CD4-positive, alpha-beta memory T cell (primary cell): ENCODE measurements at regions of chr12 and their contacts with region 1.

Region 1: GRCh38 chr12:120194534-120195395 is at the start of gene GCN1:
- DNase-seq: peak; percentile 87 to 92 (median 89)
- H3K4me3 ChIP-seq: peak within 1 kb of the TSS; percentile 74 to 89
- H3K4me3 Mint-ChIP-seq: peak within 1 kb of the TSS; percentile 86 to 93 (median 90)
- H3K27ac ChIP-seq: peak within 1 kb of the TSS; percentile 79
- H3K27ac Mint-ChIP-seq: peak within 1 kb of the TSS; percentile 97 to 98 (median 98)
- H3K4me1 ChIP-seq: peaks cover 55% of the 10 kb centered on the region
- H3K4me1 Mint-ChIP-seq: peaks cover 30 to 70% (median 40%) of the 10 kb centered on the region in 4 donors
- H3K27me3 ChIP-seq: no peaks in the 10 kb centered on the region
- H3K27me3 Mint-ChIP-seq: no peaks in the 10 kb centered on the region
- total RNA-seq, gene GCN1: 127 to 132 TPM

Region 2: GRCh38 chr12:119804011-119804641 is 390.6 kb before region 1 on chr12:
- CTCF ChIA-PET with region 1: no interaction called
- POLR2A ChIA-PET with region 1: no interaction called
- intact Hi-C with region 1: no loop called
- DNase-seq: no peak
- H3K4me3 ChIP-seq: no peak overlapping the region
- H3K4me3 Mint-ChIP-seq: no peak overlapping the region
- H3K27ac ChIP-seq: no peak overlapping the region
- H3K27ac Mint-ChIP-seq: no peak overlapping the region
- H3K4me1 ChIP-seq: no peaks in the 10 kb centered on the region
- H3K4me1 Mint-ChIP-seq: peaks cover 5 to 7% (median 6%) of the 10 kb centered on the region in 4 donors
- H3K27me3 ChIP-seq: no peaks in the 10 kb centered on the region
- H3K27me3 Mint-ChIP-seq: no peaks in the 10 kb centered on the region

Region 3: DNA sequence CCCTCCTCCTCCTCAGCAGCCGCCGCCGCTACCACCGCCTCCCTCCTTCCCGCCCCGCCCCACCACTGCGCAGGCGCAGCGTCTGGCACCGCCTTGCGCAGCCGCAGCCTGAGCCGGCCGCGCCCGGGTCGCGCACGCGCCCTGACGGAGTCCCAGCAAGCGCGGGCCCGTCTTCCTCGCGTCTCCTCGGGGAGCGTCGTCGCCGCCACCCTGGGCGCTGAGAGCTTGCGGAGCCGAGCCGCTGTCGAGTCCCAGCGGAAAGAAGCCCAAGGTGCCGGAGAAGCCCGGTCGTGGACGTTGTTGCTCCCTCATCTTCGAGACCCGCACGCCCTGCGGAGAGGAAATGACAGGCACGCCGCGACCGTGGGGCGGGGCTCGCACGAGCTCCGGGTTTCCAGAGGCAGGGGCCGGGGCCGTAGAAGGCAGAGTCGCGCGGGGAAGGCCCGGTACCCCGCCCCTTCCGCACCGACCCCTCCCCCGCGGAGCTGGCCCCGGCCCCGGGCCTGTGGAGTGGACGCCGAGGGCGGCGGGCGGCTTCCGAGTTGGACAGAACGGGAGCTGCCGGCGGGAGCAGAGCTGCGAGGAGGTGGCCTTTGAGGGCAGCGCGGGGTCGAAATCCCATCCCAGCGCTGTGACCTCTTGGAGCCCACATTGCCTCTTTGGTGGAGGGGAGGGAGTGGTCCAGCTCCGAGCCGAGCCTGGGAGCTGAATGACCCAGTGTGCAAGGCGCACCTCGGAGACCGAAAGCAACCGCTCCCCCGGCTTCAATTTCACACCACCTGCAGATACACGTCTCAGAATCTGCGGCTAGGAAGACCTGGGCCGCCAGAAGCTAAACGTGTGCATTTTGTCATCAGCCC is 77.7 kb before region 1 on chr12:
- CTCF ChIA-PET with region 1: no interaction called
- POLR2A ChIA-PET with region 1: interaction called, 52 read pairs
- intact Hi-C with region 1: no loop called
- DNase-seq: peak; percentile 95 to 99 (median 97)
- H3K4me3 ChIP-seq: peak overlapping the region; percentile 75 to 80
- H3K4me3 Mint-ChIP-seq: peak overlapping the region; percentile 86 to 98 (median 90)
- H3K27ac ChIP-seq: peak overlapping the region; percentile 83
- H3K27ac Mint-ChIP-seq: peak overlapping the region; percentile 85 to 99 (median 94)
- H3K4me1 ChIP-seq: peaks cover 84% of the 10 kb centered on the region
- H3K4me1 Mint-ChIP-seq: peaks cover 59 to 88% (median 76%) of the 10 kb centered on the region in 4 donors
- H3K27me3 ChIP-seq: no peaks in the 10 kb centered on the region
- H3K27me3 Mint-ChIP-seq: no peaks in the 10 kb centered on the region

Region 4: DNA sequence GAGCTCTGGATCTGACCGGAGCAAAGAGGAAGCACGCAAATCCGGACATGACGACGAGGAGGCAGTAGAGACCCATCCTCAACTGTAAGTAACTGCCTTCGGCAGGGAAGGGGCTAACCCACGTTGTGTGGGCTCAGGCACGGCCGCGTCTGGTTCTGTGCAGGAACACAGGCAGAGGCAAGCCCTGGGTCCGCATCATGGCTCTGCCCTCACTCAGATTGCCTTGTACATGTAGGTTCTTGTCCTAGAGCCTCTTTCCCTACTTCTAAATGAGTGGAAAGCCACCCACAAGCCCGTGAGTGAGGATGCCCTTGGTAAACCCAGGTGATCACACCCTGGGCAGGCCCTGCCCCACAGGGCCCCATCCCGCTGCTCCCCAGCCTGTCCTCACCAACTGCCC is 15.1 kb after region 1 on chr12:
- CTCF ChIA-PET with region 1: interaction called, 3 read pairs
- POLR2A ChIA-PET with region 1: interaction called, 27 read pairs
- intact Hi-C with region 1: no loop called
- DNase-seq: no peak
- H3K4me3 ChIP-seq: no peak overlapping the region
- H3K4me3 Mint-ChIP-seq: no peak overlapping the region
- H3K27ac ChIP-seq: no peak overlapping the region
- H3K27ac Mint-ChIP-seq: peak overlapping the region in 1 of 7 donors; percentile 26
- H3K4me1 ChIP-seq: no peaks in the 10 kb centered on the region
- H3K4me1 Mint-ChIP-seq: peaks cover 0 to 7% (median under 1%) of the 10 kb centered on the region in 4 donors
- H3K27me3 ChIP-seq: no peaks in the 10 kb centered on the region
- H3K27me3 Mint-ChIP-seq: no peaks in the 10 kb centered on the region

Region 5: GRCh38 chr12:120249875-120250795 is 55.4 kb after region 1 on chr12:
- CTCF ChIA-PET with region 1: no interaction called
- POLR2A ChIA-PET with region 1: interaction called, 94 read pairs
- intact Hi-C with region 1: no loop called
- DNase-seq: peak; percentile 52 to 61 (median 59)
- H3K4me3 ChIP-seq: peak overlapping the region; percentile 4 to 49
- H3K4me3 Mint-ChIP-seq: peak overlapping the region; percentile 65 to 91 (median 82)
- H3K27ac ChIP-seq: peak overlapping the region; percentile 50
- H3K27ac Mint-ChIP-seq: peak overlapping the region; percentile 81 to 99 (median 95)
- H3K4me1 ChIP-seq: peaks cover 90% of the 10 kb centered on the region
- H3K4me1 Mint-ChIP-seq: peaks cover 67 to 88% (median 78%) of the 10 kb centered on the region in 4 donors
- H3K27me3 ChIP-seq: no peaks in the 10 kb centered on the region
- H3K27me3 Mint-ChIP-seq: no peaks in the 10 kb centered on the region

Region 6: GRCh38 chr12:120265473-120266179 is 70.9 kb after region 1 on chr12 and contains the start of gene PXN:
- CTCF ChIA-PET with region 1: interaction called, 87 read pairs
- POLR2A ChIA-PET with region 1: interaction called, 102 read pairs
- intact Hi-C with region 1: no loop called
- DNase-seq: peak; percentile 84 to 93 (median 89)
- H3K4me3 ChIP-seq: peak within 1 kb of the TSS; percentile 59 to 85
- H3K4me3 Mint-ChIP-seq: peak within 1 kb of the TSS; percentile 89 to 100 (median 94)
- H3K27ac ChIP-seq: peak within 1 kb of the TSS; percentile 81
- H3K27ac Mint-ChIP-seq: peak within 1 kb of the TSS; percentile 92 to 98 (median 96)
- H3K4me1 ChIP-seq: peaks cover 44% of the 10 kb centered on the region
- H3K4me1 Mint-ChIP-seq: peaks cover 24 to 51% (median 37%) of the 10 kb centered on the region in 4 donors
- H3K27me3 ChIP-seq: no peaks in the 10 kb centered on the region
- H3K27me3 Mint-ChIP-seq: no peaks in the 10 kb centered on the region
- total RNA-seq, gene PXN: 108 to 126 TPM

Region 7: GRCh38 chr12:120301962-120302815 is 107.4 kb after region 1 on chr12 and contains the start of gene SIRT4:
- CTCF ChIA-PET with region 1: interaction called, 4 read pairs
- POLR2A ChIA-PET with region 1: interaction called, 27 read pairs
- intact Hi-C with region 1: no loop called
- DNase-seq: peak; percentile 87 to 91 (median 88)
- H3K4me3 ChIP-seq: peak within 1 kb of the TSS; percentile 65 to 94
- H3K4me3 Mint-ChIP-seq: peak within 1 kb of the TSS; percentile 93 to 98 (median 96)
- H3K27ac ChIP-seq: peak within 1 kb of the TSS; percentile 62
- H3K27ac Mint-ChIP-seq: peak within 1 kb of the TSS; percentile 77 to 95 (median 93)
- H3K4me1 ChIP-seq: peaks cover 3% of the 10 kb centered on the region
- H3K4me1 Mint-ChIP-seq: peaks cover 6 to 10% (median 8%) of the 10 kb centered on the region in 4 donors
- H3K27me3 ChIP-seq: no peaks in the 10 kb centered on the region
- H3K27me3 Mint-ChIP-seq: no peaks in the 10 kb centered on the region
- total RNA-seq, gene SIRT4: 4.9 to 5.9 TPM

Region 8: DNA sequence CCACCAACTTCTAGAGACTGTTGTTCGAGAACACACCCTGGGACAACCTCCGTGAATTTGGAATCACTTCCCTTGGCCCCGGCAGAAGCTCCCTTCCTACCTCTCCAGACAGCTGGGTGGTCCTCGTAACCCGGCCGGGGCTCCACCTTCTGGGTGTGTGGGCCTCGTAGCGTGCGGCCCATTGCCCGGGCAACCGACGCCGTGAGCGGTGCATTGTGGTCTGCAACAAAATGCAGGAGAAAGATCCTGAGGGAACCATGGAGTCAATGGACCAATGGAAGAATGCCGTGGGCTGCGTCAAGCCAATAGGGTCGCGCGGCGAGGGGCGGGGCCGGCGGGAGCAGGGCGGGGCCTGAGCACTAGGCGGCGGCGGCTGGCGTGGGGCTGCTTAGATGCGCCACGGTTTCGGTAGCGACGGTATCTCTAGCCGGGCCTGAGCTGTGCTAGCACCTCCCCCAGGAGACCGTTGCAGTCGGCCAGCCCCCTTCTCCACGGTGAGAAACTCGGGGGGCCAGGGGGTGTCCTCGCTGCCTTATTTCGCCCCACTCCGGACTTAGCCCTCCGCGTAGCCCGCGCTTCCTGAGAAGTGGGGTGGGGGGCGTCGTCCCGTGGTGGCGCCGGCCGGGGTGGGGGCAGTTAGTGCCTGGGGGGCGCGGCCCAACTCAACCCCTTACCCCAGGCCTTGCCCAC is 301.1 kb after region 1 on chr12 and contains the start of gene DYNLL1:
- CTCF ChIA-PET with region 1: no interaction called
- POLR2A ChIA-PET with region 1: interaction called, 10 read pairs
- intact Hi-C with region 1: no loop called
- DNase-seq: peak; percentile 96 to 98 (median 97)
- H3K4me3 ChIP-seq: peak within 1 kb of the TSS; percentile 93 to 94
- H3K4me3 Mint-ChIP-seq: peak within 1 kb of the TSS; percentile 91 to 98 (median 94)
- H3K27ac ChIP-seq: peak within 1 kb of the TSS; percentile 82
- H3K27ac Mint-ChIP-seq: peak within 1 kb of the TSS; percentile 89 to 96 (median 94)
- H3K4me1 ChIP-seq: peaks cover 19% of the 10 kb centered on the region
- H3K4me1 Mint-ChIP-seq: peaks cover 22 to 49% (median 37%) of the 10 kb centered on the region in 4 donors
- H3K27me3 ChIP-seq: no peaks in the 10 kb centered on the region
- H3K27me3 Mint-ChIP-seq: no peaks in the 10 kb centered on the region
- total RNA-seq, gene DYNLL1: 97.5 to 108 TPM